Motor neuron (in vitro differentiated cells): ENCODE measurements at regions of chr14 and their contacts with region 1.

Region 1: DNA sequence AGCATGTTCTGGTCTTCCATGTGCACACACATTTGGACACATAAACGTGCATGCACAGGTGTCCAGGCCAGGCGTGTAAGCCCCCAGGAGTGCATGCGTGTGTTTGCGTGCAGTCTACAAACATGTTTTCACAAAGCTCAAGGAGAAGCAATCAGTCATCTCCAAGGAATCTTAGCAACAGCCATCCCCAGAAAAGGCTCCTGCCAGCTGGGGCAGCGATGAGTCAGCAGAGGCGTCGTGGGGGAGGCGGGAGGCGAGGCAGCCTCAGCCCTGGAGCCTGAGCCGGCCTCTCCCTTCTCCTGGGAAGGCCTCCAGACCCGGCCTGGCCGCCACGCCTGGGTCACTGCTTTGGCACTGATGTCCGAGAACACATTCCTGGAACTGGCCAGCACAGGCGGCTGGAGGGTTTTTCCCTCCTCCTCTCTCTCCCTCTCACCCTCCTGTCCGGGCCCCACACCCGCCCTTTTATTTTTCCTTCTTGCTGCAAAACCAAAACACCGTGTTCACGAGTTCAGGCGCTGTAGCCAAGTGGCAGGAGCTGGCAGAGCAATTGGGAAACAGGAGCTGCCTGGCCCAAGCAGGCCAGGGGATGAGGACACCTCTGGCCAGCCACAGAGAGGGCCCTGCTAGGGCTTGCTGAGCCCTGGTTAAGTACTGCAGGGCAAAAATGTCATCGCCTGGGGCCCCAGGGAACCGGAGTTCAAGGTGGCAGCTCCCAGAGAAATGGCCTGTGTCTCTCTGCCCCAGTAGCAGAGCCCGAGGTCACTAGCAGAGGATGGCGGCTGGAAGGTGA is 92.7 kb downstream of the LRRC74A start:
- ATAC-seq: peak; percentile 63 to 86 (median 70)
- H3K4me3 ChIP-seq: no peak overlapping the region
- H3K27ac ChIP-seq: peak overlapping the region; percentile 94 to 98
- H3K4me1 ChIP-seq: peaks cover 74 to 79% of the 10 kb centered on the region in 2 donors

Region 2: GRCh38 chr14:76045773-76046172 is 873.2 kb before region 1 on chr14:
- in situ Hi-C with region 1: no loop called
- ATAC-seq: no peak
- H3K4me3 ChIP-seq: no peak overlapping the region
- H3K27ac ChIP-seq: no peak overlapping the region
- H3K4me1 ChIP-seq: peaks cover 0 to 5% of the 10 kb centered on the region in 2 donors

Region 3: GRCh38 chr14:76465664-76466063 is 453.3 kb before region 1 on chr14:
- in situ Hi-C with region 1: no loop called
- ATAC-seq: peak in 4 of 8 experiments; percentile 28 to 42 (median 38)
- H3K4me3 ChIP-seq: no peak overlapping the region
- H3K27ac ChIP-seq: no peak overlapping the region
- H3K4me1 ChIP-seq: peaks cover 25 to 27% of the 10 kb centered on the region in 2 donors

Region 4: GRCh38 chr14:77053046-77053841 is 134.3 kb after region 1 on chr14:
- in situ Hi-C with region 1: loop called in 7 of 9 experiments (anchors 10 to 25 kb)
- ATAC-seq: peak; percentile 66 to 98 (median 74)
- H3K4me3 ChIP-seq: no peak overlapping the region
- H3K27ac ChIP-seq: no peak overlapping the region
- H3K4me1 ChIP-seq: peaks cover 6 to 16% of the 10 kb centered on the region in 2 donors